ENCODE measurements at regions of chr20 and their contacts with region 1.

Region 1: GRCh38 chr20:32743237-32744112 is at the start of gene COMMD7:
- DNase-seq: peak; percentile 54 to 74
- ATAC-seq: peak; percentile 66 to 86 (median 84)
- H3K4me3 ChIP-seq: peak within 1 kb of the TSS; percentile 86
- H3K4me3 Mint-ChIP-seq: peak within 1 kb of the TSS; percentile 98
- H3K27ac ChIP-seq: peak within 1 kb of the TSS; percentile 90
- H3K27ac Mint-ChIP-seq: peak within 1 kb of the TSS; percentile 94 to 99
- H3K4me1 ChIP-seq: peaks cover 26% of the 10 kb centered on the region
- H3K4me1 Mint-ChIP-seq: peaks cover 29 to 37% of the 10 kb centered on the region in 2 donors
- H3K27me3 ChIP-seq: no peaks in the 10 kb centered on the region
- H3K27me3 Mint-ChIP-seq: no peaks in the 10 kb centered on the region
- CTCF ChIP-seq: no peak
- total RNA-seq, gene COMMD7: 56.7 to 72.1 (median 68.1) TPM

Region 2: DNA sequence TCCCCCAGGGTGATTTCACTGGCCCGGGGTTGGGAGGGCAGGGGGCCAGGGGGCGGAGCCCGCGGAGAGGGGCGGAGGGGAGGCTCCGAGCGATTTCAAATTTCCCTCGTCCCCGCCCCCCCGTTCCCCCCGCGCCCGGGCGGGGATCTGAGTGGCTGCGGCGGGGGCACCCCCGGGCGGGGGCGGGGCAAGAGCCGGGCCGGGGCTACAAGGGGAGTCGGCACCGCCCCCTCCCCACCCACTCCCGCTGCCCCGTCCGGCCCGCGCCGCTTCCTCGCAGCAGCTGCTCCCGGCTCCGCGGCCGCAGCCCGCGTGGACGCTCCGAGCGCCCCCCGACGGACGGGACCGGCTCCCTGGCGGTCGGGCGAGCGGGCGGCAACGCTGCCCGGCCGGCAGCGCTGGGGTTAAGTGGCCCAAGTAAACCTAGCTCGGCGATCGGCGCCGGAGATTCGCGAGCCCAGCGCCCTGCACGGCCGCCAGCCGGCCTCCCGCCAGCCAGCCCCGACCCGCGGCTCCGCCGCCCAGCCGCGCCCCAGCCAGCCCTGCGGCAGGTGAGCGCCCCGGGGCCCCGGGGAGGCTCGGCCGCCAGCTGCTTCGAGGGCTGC is 18.8 kb after region 1 on chr20 and contains the start of gene DNMT3B:
- intact Hi-C with region 1: loop called (anchors 2 kb)
- DNase-seq: peak; percentile 61 to 76
- ATAC-seq: peak; percentile 85 to 89 (median 88)
- H3K4me3 ChIP-seq: peak within 1 kb of the TSS; percentile 80
- H3K4me3 Mint-ChIP-seq: peak within 1 kb of the TSS; percentile 90
- H3K27ac ChIP-seq: no peak within 1 kb of the TSS
- H3K27ac Mint-ChIP-seq: peak within 1 kb of the TSS in 1 of 2 donors; percentile 82
- H3K4me1 ChIP-seq: peaks cover 23% of the 10 kb centered on the region
- H3K4me1 Mint-ChIP-seq: peaks cover 7 to 20% of the 10 kb centered on the region in 2 donors
- H3K27me3 ChIP-seq: no peaks in the 10 kb centered on the region
- H3K27me3 Mint-ChIP-seq: peaks cover 0 to 2% of the 10 kb centered on the region in 2 donors
- CTCF ChIP-seq: no peak
- total RNA-seq, gene DNMT3B: 0.42 to 0.68 (median 0.43) TPM

Region 3: DNA sequence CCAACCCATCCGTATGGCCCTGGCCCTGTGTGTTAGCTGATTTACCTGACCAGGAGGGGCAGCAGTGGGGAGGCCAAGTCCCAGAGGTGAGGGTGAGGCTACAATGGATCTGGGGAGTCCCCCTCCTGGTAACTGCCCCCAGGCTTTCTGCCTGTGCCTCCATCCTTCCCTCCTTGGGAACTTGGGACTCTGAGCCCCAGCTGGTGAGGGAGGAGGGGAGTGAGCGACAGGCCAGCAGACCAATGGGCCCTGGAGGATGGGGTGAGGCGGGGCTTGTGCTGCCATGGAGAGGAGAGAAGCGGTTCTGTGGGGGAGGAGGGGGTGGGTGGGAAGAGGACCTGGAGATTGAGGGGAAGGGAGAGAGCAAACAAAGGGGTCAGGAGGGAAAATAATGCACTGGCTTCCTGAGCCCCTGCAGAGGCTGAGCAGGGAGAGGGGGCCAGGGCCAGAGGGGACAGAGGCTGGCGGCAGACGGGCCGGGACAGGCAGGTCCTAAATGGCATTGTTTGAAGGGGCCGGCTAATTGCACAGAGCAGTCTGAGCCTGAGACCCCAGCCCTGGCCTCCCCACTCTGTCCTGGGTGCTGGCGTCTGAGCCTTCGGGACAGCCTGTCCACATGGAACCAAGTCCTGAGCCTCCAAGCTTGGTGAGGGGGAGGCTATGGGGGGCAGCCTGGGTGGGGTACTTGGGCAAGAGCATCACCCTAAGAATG is 36.2 kb after region 1 on chr20:
- intact Hi-C with region 1: loop called (anchors 5 kb)
- DNase-seq: no peak
- ATAC-seq: no peak
- H3K4me3 ChIP-seq: no peak overlapping the region
- H3K4me3 Mint-ChIP-seq: no peak overlapping the region
- H3K27ac ChIP-seq: no peak overlapping the region
- H3K27ac Mint-ChIP-seq: no peak overlapping the region
- H3K4me1 ChIP-seq: peaks cover 3% of the 10 kb centered on the region
- H3K4me1 Mint-ChIP-seq: peaks cover 0 to 9% of the 10 kb centered on the region in 2 donors
- H3K27me3 ChIP-seq: no peaks in the 10 kb centered on the region
- H3K27me3 Mint-ChIP-seq: no peaks in the 10 kb centered on the region
- CTCF ChIP-seq: no peak

Region 4: GRCh38 chr20:32807706-32808105 is 64.2 kb after region 1 on chr20:
- intact Hi-C with region 1: no loop called
- DNase-seq: no peak
- ATAC-seq: no peak
- H3K4me3 ChIP-seq: no peak overlapping the region
- H3K4me3 Mint-ChIP-seq: no peak overlapping the region
- H3K27ac ChIP-seq: no peak overlapping the region
- H3K27ac Mint-ChIP-seq: no peak overlapping the region
- H3K4me1 ChIP-seq: no peaks in the 10 kb centered on the region
- H3K4me1 Mint-ChIP-seq: no peaks in the 10 kb centered on the region
- H3K27me3 ChIP-seq: no peaks in the 10 kb centered on the region
- H3K27me3 Mint-ChIP-seq: no peaks in the 10 kb centered on the region
- CTCF ChIP-seq: no peak

Region 5: DNA sequence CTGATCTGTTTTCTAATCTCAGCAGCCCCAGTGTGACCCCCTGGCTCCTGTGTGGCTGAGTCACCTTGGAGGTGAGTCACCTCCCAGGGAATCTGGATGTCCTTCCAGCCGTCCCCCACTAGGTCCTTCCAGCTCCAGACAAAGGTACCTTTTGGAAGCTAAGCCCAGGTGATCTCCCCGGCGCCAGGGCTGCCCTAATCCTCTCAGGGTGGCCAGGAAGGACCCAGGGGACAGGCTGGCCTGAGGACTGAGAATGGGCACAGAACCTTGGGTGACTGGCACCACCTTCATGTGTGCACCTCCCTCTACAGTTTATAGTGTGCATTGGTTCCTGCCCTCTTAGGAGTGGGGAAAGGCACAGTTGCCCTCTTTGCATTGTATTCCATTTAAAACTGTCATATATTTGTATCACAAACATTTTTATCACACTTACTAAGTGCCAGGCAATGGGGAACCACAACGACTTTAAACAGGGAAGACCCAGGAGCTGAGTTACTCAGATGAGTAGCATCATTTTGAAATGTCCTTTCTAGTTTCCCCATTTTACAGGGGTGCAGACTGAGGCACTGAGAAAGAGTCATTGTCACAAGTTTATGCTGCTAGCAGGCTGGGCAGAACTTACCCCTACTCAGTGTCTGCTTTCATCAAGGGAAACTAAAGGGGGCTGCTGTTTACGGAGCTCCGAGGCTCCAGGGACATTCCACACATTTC is 333.3 kb after region 1 on chr20:
- intact Hi-C with region 1: no loop called
- DNase-seq: peak in 1 of 2 donors; percentile 45
- ATAC-seq: no peak
- H3K4me3 ChIP-seq: no peak overlapping the region
- H3K4me3 Mint-ChIP-seq: no peak overlapping the region
- H3K27ac ChIP-seq: no peak overlapping the region
- H3K27ac Mint-ChIP-seq: no peak overlapping the region
- H3K4me1 ChIP-seq: no peaks in the 10 kb centered on the region
- H3K4me1 Mint-ChIP-seq: no peaks in the 10 kb centered on the region
- H3K27me3 ChIP-seq: no peaks in the 10 kb centered on the region
- H3K27me3 Mint-ChIP-seq: peaks cover 0 to 2% of the 10 kb centered on the region in 2 donors
- CTCF ChIP-seq: no peak

Measured in natural killer cell (primary cell).